Head of caudate nucleus (tissue), 42 donors: ENCODE measurements at regions of chr12 and their contacts with region 1.

Region 1: GRCh38 chr12:57693659-57694458 is at the start of gene OS9:
- DNase-seq: peak; percentile 93 to 99 (median 98)

Region 2: GRCh38 chr12:57632694-57633477 is 61.0 kb before region 1 on chr12 and contains the start of gene B4GALNT1:
- intact Hi-C with region 1: loop called (anchors 10 kb)
- DNase-seq: peak in 40 of 42 donors; percentile 52 to 86 (median 72)

Region 3: GRCh38 chr12:57744777-57745484 is 51.1 kb after region 1 on chr12 and contains the start of gene TSPAN31:
- intact Hi-C with region 1: loop called (anchors 10 kb)
- DNase-seq: peak; percentile 96 to 100 (median 98)

Region 4: GRCh38 chr12:57904848-57905811 is 211.3 kb after region 1 on chr12:
- intact Hi-C with region 1: no loop called
- DNase-seq: peak; percentile 57 to 95 (median 88)